ENCODE measurements at regions of chr1 and their contacts with region 1.

Region 1: DNA sequence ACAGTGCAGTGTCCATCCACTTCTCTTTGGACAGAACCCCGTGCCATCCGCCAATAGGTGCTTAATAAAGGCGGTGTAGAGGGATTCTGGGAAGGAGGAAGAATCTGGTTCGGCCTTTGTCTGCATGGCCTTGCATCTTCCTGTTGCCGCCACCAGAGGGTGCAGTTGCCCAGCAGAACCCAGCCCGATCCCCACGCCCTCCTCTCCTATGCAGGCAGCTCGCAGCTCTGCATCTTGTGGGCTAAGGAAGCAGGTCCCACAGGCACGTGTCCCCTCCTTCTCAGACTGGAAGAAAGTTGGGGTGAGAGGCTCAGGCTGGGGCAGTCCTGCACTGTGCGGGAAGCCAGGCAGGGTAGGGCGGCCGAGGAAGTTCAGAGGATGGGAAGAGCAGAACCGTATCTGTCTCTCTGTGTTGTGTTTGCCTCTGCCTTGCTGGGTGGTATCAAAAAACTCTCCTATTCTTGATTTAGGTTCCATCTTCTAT is 20.8 kb downstream of the NAV1 start:
- DNase-seq: peak; percentile 93

Region 2: DNA sequence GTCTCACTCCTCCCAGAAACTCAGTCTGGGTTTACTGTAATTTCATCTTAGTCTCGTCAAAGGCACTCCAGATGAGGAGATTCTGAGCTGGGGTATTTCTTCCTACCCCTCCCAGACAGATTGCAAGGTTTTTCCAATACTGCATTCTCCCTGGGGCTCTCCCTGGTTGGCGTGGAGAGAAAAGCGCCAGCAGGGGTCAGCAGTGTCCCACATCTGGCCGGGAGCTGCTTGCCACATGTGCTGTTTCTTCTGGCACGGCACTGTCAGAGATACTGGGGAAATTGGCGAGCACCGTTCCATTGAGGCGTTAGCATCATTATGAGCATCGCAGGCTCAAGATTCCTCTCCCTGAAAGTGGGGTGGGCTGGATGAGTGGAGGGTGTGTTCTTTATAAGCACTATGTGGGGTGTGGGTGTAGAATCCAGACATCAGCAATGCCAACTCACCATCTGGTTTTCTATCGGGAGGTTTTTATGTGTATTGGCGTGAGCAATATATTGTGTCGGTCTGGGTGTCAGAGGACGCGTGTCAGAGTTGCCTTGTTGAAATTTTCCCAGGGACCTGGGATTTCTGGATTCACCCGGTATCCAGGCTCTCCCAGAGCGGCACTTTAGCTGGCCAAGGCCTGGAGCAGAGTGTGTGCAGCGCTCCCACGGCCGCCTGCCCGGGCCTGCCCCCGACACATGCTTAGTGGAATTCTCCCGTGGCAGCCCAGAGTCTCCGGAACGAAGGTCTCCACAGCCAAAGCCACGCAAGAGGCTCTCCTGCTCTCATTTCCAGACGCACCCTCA is 28.8 kb before region 1 on chr1:
- CTCF ChIA-PET with region 1: interaction called, 23 read pairs
- POLR2A ChIA-PET with region 1: no interaction called
- DNase-seq: peak; percentile 90

Region 3: GRCh38 chr1:201703621-201704439 is 144.1 kb after region 1 on chr1:
- CTCF ChIA-PET with region 1: interaction called, 29 read pairs
- POLR2A ChIA-PET with region 1: no interaction called
- DNase-seq: peak; percentile 95

Region 4: GRCh38 chr1:201709564-201710295 is 150.0 kb after region 1 on chr1:
- CTCF ChIA-PET with region 1: interaction called, 29 read pairs
- POLR2A ChIA-PET with region 1: no interaction called
- DNase-seq: peak; percentile 83

Region 5: GRCh38 chr1:201904579-201904978 is 344.9 kb after region 1 on chr1:
- CTCF ChIA-PET with region 1: no interaction called
- POLR2A ChIA-PET with region 1: no interaction called
- DNase-seq: no peak

Region 6: DNA sequence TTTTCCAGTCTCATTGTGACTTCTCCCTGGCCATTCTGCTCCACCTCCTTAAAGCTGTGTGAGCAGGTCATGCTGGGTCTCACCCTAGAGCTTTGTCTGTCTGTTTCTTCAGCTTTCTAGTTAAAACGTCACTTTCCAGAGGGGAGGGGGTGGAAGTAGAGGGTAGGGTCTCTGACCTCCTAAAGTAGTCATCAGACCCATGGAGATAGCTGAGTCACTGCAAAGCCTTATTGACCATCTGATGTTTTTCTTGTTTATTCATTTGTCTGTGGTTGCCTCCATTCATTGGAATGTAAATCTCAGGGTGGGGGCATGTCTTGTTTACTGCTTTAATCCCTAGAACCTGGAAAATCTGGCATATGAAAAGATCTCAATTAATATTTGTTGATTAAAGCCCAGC is 503.4 kb after region 1 on chr1:
- CTCF ChIA-PET with region 1: no interaction called
- POLR2A ChIA-PET with region 1: no interaction called
- DNase-seq: no peak